AG04450 (cell line): ENCODE measurements at regions of chr17 and their contacts with region 1.

Region 1: DNA sequence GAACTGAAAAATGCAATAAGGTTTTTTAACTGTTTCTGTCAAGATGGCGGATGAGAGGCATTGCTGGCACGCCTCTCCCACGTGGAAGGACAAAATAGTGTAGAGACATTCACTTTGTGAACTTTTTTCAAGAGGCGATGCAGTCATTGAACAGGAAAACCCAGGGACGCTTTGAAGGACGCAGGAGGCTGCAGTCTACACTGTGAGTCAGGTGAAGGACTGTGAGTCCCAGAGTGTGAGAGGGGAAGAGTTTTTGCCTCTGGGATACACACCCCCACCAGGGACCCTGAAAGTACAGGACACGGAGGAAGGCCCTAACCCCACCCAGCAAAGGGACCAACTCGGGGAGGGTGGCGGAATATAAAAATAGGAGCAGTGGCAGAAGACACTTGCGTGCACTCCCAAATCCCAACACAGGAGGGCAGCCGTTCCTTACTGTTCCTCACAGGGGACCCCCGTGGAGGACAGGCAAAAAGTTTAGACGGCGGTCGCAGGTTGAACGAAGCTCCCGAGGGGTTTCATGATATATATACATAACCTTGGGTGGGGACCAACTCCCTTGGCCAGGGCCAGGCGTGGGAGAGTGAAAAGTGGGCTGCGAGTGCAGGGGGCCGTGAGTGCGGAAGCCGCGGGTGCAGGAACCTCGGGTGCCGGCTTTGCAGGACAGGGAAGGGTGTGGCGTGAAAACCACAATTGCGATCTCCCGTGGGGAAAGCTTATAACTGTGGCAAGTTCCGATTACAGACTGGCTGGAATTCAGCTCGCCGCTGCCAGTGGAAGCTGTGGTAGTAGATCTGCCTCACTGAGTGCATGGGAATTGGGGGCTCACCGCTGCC is 82.0 kb upstream of the ALOX12 start:
- DNase-seq: no peak
- H3K4me3 ChIP-seq: no peak overlapping the region
- H3K27ac ChIP-seq: no peak overlapping the region
- H3K27me3 ChIP-seq: peaks cover 8% of the 10 kb centered on the region
- CTCF ChIP-seq: peak; percentile 77

Region 2: DNA sequence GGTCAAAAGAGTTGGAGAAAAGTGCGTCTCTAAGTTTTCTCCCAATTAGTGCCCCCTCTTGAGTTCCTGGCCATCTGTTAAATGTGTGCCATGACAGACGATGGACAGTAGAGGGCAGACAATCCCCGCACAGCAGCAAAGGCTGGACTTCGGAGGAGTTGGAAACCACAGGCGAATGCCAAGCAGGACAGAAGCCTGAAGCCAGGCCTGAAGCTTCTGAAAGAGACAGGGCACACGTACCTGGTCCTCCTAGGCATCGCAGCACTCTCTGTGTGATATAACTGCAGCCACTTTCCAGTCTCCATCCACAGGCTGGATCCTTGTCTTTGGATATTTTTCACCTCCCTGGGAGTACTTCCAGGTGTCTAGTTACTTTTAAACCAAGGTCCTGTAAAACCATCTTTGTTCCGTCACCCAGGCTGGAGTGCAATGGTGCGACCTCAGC is 247.7 kb before region 1 on chr17:
- CTCF ChIA-PET with region 1: interaction called, 35 read pairs
- POLR2A ChIA-PET with region 1: no interaction called
- DNase-seq: peak; percentile 60
- H3K4me3 ChIP-seq: no peak overlapping the region
- H3K27ac ChIP-seq: no peak overlapping the region
- H3K27me3 ChIP-seq: peaks cover 28% of the 10 kb centered on the region
- CTCF ChIP-seq: peak; percentile 98

Region 3: DNA sequence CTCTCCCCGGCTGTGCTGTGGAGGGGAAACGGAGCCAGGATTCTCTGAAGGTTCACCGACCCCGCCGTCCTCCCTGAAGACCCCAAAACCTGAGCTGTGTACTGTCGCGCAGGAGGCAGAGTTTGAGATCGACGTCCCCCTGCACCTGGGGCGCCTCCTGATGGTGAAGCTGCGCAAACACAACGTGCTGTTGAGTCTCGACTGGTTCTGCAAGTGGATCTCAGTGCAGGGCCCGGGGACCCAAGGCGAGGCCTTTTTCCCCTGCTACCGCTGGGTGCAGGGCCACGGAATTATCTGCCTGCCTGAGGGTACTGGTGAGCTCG is 19.7 kb before region 1 on chr17:
- CTCF ChIA-PET with region 1: interaction called, 16 read pairs
- POLR2A ChIA-PET with region 1: no interaction called
- DNase-seq: no peak
- H3K4me3 ChIP-seq: no peak overlapping the region
- H3K27ac ChIP-seq: no peak overlapping the region
- H3K27me3 ChIP-seq: peaks cover 34% of the 10 kb centered on the region
- CTCF ChIP-seq: peak; percentile 36

Region 4: DNA sequence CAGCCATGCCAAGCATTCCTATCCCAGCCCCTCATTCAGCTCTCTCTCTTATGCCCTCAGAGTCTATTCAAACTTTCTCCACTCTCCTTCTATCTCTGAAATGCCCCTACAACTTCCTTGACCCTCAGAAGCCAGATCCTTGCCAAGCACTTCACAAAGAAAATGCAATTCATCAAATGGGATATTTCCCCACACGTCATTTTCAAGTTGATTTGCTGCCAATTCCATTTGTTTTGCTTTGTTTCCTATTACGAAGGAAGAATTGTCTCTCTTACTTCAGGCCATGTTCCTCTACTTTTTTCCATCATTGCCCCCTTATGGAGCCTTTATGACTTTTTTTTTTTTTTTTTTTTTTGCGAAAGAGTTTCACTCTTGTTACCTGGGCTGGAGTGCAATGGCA is 72.8 kb after region 1 on chr17:
- CTCF ChIA-PET with region 1: interaction called, 18 read pairs
- POLR2A ChIA-PET with region 1: no interaction called
- DNase-seq: no peak
- H3K4me3 ChIP-seq: no peak overlapping the region
- H3K27ac ChIP-seq: no peak overlapping the region
- H3K27me3 ChIP-seq: no peaks in the 10 kb centered on the region
- CTCF ChIP-seq: no peak

Region 5: GRCh38 chr17:7004398-7005253 is 90.8 kb after region 1 on chr17:
- CTCF ChIA-PET with region 1: interaction called, 218 read pairs
- POLR2A ChIA-PET with region 1: interaction called, 3 read pairs
- DNase-seq: no peak
- H3K4me3 ChIP-seq: no peak overlapping the region
- H3K27ac ChIP-seq: no peak overlapping the region
- H3K27me3 ChIP-seq: no peaks in the 10 kb centered on the region
- CTCF ChIP-seq: peak; percentile 69

Region 6: DNA sequence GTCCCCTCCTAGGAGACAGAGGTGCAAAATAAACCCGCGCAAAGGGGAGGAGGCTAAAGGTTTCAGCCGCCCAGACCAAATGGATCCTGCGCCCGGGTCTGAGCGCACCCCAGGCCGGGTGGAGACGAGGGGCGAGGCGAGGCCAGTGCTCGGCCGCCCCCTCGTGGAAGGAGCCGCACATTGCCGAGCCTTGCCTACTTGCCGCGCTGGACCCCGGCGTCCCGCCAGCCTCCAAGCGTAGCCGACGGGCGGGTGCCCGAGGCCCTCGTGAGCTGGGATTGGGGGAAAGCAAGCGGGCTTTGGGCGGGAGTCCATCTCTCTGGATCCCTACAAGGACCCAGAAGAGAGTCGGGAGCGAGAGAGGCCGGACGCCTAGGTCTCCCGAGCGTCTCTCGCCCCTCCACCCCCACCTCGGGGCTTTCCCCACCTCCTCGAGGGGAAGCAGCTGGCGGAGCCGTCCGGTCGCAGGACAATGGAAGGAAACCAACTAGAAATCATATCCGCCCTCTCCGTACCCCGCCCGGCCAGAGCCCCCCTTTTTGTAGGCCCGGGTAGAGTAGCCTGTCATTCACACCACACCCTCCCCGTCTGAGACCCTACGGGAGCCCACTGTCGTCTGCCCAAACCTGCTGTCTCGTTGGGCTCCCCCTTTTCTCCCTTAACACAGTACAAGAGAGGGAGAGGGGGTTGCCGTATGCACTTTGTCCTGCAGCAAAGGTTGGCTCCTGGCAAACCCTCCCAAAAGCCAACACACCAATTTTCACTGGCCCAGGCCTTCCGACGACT is 108.4 kb after region 1 on chr17:
- CTCF ChIA-PET with region 1: interaction called, 87 read pairs
- POLR2A ChIA-PET with region 1: no interaction called
- DNase-seq: no peak
- H3K4me3 ChIP-seq: peak overlapping the region; percentile 36
- H3K27ac ChIP-seq: no peak overlapping the region
- H3K27me3 ChIP-seq: no peaks in the 10 kb centered on the region
- CTCF ChIP-seq: peak; percentile 87